Activated T-helper 1 cell treated with anti-CD3 and anti-CD28 coated beads, Interleukin-12 subunit alpha, Interleukin-12 subunit beta, Interleukin-2, Interleukin-4 antibody, amounts not matched to agents 30 ng/mL and 10 ng/mL and 1 ng/mL, durations not matched to agents 14 hours and 24 hours and 36 hours (primary cell): ENCODE measurements at regions of chr3 and their contacts with region 1.

Region 1: GRCh38 chr3:12135029-12135657 is 23.6 kb downstream of the TIMP4 start:
- DNase-seq: peak; percentile 45
- H3K4me3 Mint-ChIP-seq: no peak overlapping the region
- H3K27ac Mint-ChIP-seq: no peak overlapping the region
- H3K4me1 Mint-ChIP-seq: no peaks in the 10 kb centered on the region
- H3K27me3 Mint-ChIP-seq: peaks cover 14% of the 10 kb centered on the region

Region 2: GRCh38 chr3:12187448-12188327 is 52.5 kb after region 1 on chr3:
- intact Hi-C with region 1: no loop called
- DNase-seq: peak; percentile 56
- H3K4me3 Mint-ChIP-seq: peak overlapping the region; percentile 21
- H3K27ac Mint-ChIP-seq: peak overlapping the region; percentile 94
- H3K4me1 Mint-ChIP-seq: peaks cover 90% of the 10 kb centered on the region
- H3K27me3 Mint-ChIP-seq: peaks cover under 1% of the 10 kb centered on the region

Region 3: GRCh38 chr3:12287727-12288191 is 152.6 kb after region 1 on chr3:
- intact Hi-C with region 1: loop called (anchors 2 kb)
- DNase-seq: no peak
- H3K4me3 Mint-ChIP-seq: peak overlapping the region; percentile 60
- H3K27ac Mint-ChIP-seq: peak overlapping the region; percentile 23
- H3K4me1 Mint-ChIP-seq: peaks cover 5% of the 10 kb centered on the region
- H3K27me3 Mint-ChIP-seq: peaks cover 61% of the 10 kb centered on the region

Region 4: DNA sequence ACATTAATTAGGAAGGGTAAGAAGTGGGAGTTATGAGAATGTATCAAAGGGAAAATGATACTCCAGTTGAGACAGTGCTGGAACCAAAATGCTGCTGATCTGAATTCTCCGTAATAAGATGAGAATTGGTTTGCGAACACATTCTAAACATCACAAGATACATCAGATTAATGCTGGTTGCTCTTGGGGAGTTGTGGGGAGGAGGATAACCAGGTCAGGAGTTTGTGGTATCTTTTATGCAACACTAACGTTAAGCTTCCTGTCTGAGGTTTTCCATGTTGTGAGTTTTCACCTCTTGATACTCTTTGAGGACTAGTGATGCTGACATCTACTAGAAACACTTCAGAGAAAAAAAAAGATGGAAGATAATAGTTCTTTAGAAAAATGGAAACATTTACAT is 201.0 kb after region 1 on chr3:
- intact Hi-C with region 1: no loop called
- DNase-seq: no peak
- H3K4me3 Mint-ChIP-seq: peak overlapping the region; percentile 8
- H3K27ac Mint-ChIP-seq: peak overlapping the region; percentile 3
- H3K4me1 Mint-ChIP-seq: peaks cover 16% of the 10 kb centered on the region
- H3K27me3 Mint-ChIP-seq: peaks cover 2% of the 10 kb centered on the region

Region 5: GRCh38 chr3:12395349-12396012 is 260.3 kb after region 1 on chr3:
- intact Hi-C with region 1: loop called (anchors 2 kb)
- DNase-seq: no peak
- H3K4me3 Mint-ChIP-seq: peak overlapping the region; percentile 53
- H3K27ac Mint-ChIP-seq: peak overlapping the region; percentile 62
- H3K4me1 Mint-ChIP-seq: peaks cover 12% of the 10 kb centered on the region
- H3K27me3 Mint-ChIP-seq: peaks cover 19% of the 10 kb centered on the region

Region 6: GRCh38 chr3:12719984-12720898 is 585.1 kb after region 1 on chr3:
- intact Hi-C with region 1: loop called (anchors 1 kb)
- DNase-seq: peak; percentile 66
- H3K4me3 Mint-ChIP-seq: no peak overlapping the region
- H3K27ac Mint-ChIP-seq: peak overlapping the region; percentile 41
- H3K4me1 Mint-ChIP-seq: peaks cover 9% of the 10 kb centered on the region
- H3K27me3 Mint-ChIP-seq: peaks cover 5% of the 10 kb centered on the region